ENCODE measurements at regions of chr7 and their contacts with region 1.

Region 1: GRCh38 chr7:94449148-94449725 is 54.5 kb downstream of the COL1A2 start:
- DNase-seq: no peak
- ATAC-seq: no peak
- H3K4me3 Mint-ChIP-seq: no peak overlapping the region
- H3K27ac Mint-ChIP-seq: no peak overlapping the region
- H3K4me1 Mint-ChIP-seq: no peaks in the 10 kb centered on the region
- H3K27me3 Mint-ChIP-seq: peaks cover 10% of the 10 kb centered on the region
- CTCF ChIP-seq: no peak

Region 2: GRCh38 chr7:94436018-94436604 is 13.1 kb before region 1 on chr7:
- CTCF ChIA-PET with region 1: interaction called, 12 read pairs
- POLR2A ChIA-PET with region 1: no interaction called
- intact Hi-C with region 1: no loop called
- DNase-seq: no peak
- ATAC-seq: peak; percentile 71
- H3K4me3 Mint-ChIP-seq: no peak overlapping the region
- H3K27ac Mint-ChIP-seq: no peak overlapping the region
- H3K4me1 Mint-ChIP-seq: no peaks in the 10 kb centered on the region
- H3K27me3 Mint-ChIP-seq: peaks cover 13% of the 10 kb centered on the region
- CTCF ChIP-seq: peak; percentile 81

Region 3: GRCh38 chr7:95045236-95045923 is 596.1 kb after region 1 on chr7:
- CTCF ChIA-PET with region 1: interaction called, 3 read pairs
- POLR2A ChIA-PET with region 1: no interaction called
- intact Hi-C with region 1: loop called (anchors 5 kb)
- DNase-seq: no peak
- ATAC-seq: no peak
- H3K4me3 Mint-ChIP-seq: no peak overlapping the region
- H3K27ac Mint-ChIP-seq: no peak overlapping the region
- H3K4me1 Mint-ChIP-seq: peaks cover 5% of the 10 kb centered on the region
- H3K27me3 Mint-ChIP-seq: peaks cover 2% of the 10 kb centered on the region
- CTCF ChIP-seq: no peak

Region 4: DNA sequence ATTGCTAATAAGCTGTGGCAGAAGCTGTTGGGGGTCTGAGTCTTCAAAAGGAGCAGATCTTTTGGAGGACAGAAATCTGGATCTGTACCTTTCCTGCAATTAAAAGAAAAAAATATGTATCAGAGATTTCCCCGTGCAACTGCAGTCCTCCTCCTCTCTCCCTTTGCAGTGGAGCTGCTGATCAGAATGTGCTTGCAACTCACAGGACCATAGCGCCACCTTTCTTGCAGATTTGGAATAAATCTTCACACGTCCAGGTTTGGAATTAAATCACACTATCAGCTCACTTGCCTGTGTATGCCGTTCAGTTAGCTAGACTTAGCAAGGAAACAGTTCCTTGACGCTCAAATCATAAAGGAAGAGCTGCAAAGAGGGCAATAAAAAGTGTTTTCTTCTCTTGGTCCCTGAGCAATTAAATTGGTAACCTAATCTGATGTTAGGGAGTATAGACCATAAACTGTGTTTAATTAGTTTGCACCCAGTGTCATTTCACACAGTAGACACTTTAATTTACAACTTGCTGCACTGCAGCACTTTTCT is 797.7 kb after region 1 on chr7:
- CTCF ChIA-PET with region 1: interaction called, 20 read pairs
- POLR2A ChIA-PET with region 1: no interaction called
- intact Hi-C with region 1: loop called (anchors 1 kb)
- DNase-seq: no peak
- ATAC-seq: no peak
- H3K4me3 Mint-ChIP-seq: no peak overlapping the region
- H3K27ac Mint-ChIP-seq: no peak overlapping the region
- H3K4me1 Mint-ChIP-seq: no peaks in the 10 kb centered on the region
- H3K27me3 Mint-ChIP-seq: no peaks in the 10 kb centered on the region
- CTCF ChIP-seq: no peak

Region 5: GRCh38 chr7:95690367-95690947 is 1241.2 kb after region 1 on chr7:
- CTCF ChIA-PET with region 1: interaction called, 16 read pairs
- POLR2A ChIA-PET with region 1: no interaction called
- intact Hi-C with region 1: loop called (anchors 1 kb)
- DNase-seq: no peak
- ATAC-seq: peak; percentile 72
- H3K4me3 Mint-ChIP-seq: peak overlapping the region; percentile 2
- H3K27ac Mint-ChIP-seq: no peak overlapping the region
- H3K4me1 Mint-ChIP-seq: peaks cover 4% of the 10 kb centered on the region
- H3K27me3 Mint-ChIP-seq: peaks cover 3% of the 10 kb centered on the region
- CTCF ChIP-seq: peak; percentile 87

Measured in activated B cell treated with CpG ODN at 0.5 μM for 24 hours (primary cell).